SK-N-SH (cell line): ENCODE measurements at regions of chr10 and their contacts with region 1.

Region 1: GRCh38 chr10:49512121-49512809 is 26.7 kb downstream of the ERCC6 start:
- DNase-seq: peak; percentile 38
- H3K4me3 ChIP-seq: no peak overlapping the region
- H3K27ac ChIP-seq: no peak overlapping the region
- H3K4me1 ChIP-seq: no peaks in the 10 kb centered on the region; a peak in 1 of 4 replicates
- H3K27me3 ChIP-seq: no peaks in the 10 kb centered on the region
- CTCF ChIP-seq: peak; percentile 79
- EP300 ChIP-seq: no peak
- RAD21 ChIP-seq: peak; percentile 91

Region 2: DNA sequence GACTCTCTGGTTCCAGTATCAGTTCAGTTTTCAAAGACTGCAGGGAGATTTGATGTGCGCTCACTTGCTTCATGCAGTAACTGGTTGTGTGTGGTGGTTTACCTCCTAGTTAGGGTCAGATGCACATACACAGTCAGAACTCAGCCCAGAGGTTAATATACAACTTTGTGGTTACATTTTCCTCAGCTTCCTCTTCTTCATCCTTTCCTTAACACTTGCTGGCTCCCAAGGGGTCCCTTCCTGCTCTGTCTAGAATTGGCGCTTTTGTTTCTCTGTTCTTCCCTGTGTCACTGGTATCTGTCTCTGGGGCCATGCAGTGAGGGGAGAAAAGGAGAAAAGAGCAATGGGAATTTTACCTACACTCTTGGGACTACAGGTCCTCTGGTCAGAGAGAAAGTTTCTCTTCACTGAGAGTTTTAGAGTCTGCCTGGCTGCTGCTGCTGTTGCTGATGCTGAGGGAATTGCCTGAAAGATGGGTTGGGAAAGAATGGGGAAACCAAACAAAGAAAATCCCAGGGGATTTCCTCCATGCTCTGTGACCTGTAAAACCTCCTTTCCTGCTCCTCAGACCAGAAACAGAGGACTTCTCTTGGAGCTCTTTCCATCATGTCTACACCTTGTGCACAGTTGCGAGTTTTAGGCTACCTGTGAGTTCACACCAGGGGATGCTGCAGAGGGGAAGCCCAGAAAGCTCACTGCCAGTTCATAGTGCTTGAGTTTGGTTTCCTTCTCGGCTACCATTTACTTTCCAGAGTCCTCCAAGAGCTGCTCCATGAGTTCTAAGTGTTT is 753.0 kb before region 1 on chr10:
- CTCF ChIA-PET with region 1: no interaction called
- POLR2A ChIA-PET with region 1: no interaction called
- DNase-seq: no peak
- H3K4me3 ChIP-seq: no peak overlapping the region
- H3K27ac ChIP-seq: no peak overlapping the region
- H3K4me1 ChIP-seq: peaks cover 0 to 7% of the 10 kb centered on the region in 2 experiments; a peak in 1 of 4 replicates
- H3K27me3 ChIP-seq: no peaks in the 10 kb centered on the region
- CTCF ChIP-seq: no peak
- EP300 ChIP-seq: no peak
- RAD21 ChIP-seq: no peak

Region 3: GRCh38 chr10:48885383-48885782 is 626.9 kb before region 1 on chr10:
- CTCF ChIA-PET with region 1: interaction called, 14 read pairs
- POLR2A ChIA-PET with region 1: no interaction called
- DNase-seq: peak; percentile 70
- H3K4me3 ChIP-seq: no peak overlapping the region; a peak in 1 of 4 replicates
- H3K27ac ChIP-seq: no peak overlapping the region
- H3K4me1 ChIP-seq: no peaks in the 10 kb centered on the region; a peak in 1 of 4 replicates
- H3K27me3 ChIP-seq: no peaks in the 10 kb centered on the region
- CTCF ChIP-seq: no peak
- EP300 ChIP-seq: no peak
- RAD21 ChIP-seq: peak; percentile 82

Region 4: DNA sequence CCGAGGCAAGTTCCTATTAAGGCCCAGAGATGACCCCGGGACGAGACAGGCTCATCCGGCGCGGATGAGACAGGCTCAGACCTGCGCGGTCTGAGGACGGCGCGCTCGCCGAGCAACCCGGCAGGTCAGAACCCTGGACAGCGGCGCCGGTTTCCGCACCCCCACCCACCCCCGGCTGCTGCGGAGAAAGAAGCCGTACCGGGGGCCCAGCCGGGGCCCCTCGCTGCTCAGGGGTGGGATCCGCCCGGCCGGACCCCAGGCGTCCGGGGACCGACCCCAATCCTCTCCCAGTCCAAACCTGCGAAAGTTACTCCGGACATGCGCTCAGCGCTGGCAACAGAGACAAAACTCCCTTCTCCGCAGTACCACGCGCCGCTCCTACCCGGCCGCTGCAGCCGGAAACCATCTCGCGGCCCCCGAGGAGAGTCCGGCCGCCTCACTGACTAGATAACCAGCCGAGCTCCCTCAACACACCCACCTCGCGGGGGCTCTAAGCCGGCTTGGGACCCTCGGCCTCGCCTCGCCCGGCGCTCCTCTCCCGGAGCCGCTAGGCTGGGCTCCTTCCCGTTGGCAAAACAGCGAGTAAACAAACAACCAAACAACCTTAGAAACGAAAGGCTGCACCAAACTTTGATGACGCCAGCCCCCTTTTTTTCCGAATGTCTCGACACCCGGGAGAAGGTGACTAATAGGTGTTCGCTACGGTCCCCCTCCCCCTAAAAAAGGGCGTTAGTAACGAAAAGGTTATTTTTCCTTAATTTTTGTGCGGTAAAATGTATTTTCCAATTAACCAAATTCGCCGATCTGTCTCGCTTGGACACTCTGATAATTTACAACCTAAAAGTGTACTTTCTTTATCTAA is 114.0 kb before region 1 on chr10:
- CTCF ChIA-PET with region 1: interaction called, 16 read pairs
- POLR2A ChIA-PET with region 1: no interaction called
- DNase-seq: peak; percentile 76
- H3K4me3 ChIP-seq: peak overlapping the region; percentile 37 to 41
- H3K27ac ChIP-seq: no peak overlapping the region
- H3K4me1 ChIP-seq: peaks cover 0 to 28% of the 10 kb centered on the region in 2 experiments; a peak in 1 of 4 replicates
- H3K27me3 ChIP-seq: peaks cover 78% of the 10 kb centered on the region
- CTCF ChIP-seq: no peak
- EP300 ChIP-seq: no peak
- RAD21 ChIP-seq: no peak

Region 5: GRCh38 chr10:49446031-49446430 is 66.2 kb before region 1 on chr10:
- CTCF ChIA-PET with region 1: no interaction called
- POLR2A ChIA-PET with region 1: no interaction called
- DNase-seq: no peak
- H3K4me3 ChIP-seq: no peak overlapping the region
- H3K27ac ChIP-seq: no peak overlapping the region
- H3K4me1 ChIP-seq: no peaks in the 10 kb centered on the region
- H3K27me3 ChIP-seq: no peaks in the 10 kb centered on the region
- CTCF ChIP-seq: no peak
- EP300 ChIP-seq: no peak
- RAD21 ChIP-seq: no peak

Region 6: DNA sequence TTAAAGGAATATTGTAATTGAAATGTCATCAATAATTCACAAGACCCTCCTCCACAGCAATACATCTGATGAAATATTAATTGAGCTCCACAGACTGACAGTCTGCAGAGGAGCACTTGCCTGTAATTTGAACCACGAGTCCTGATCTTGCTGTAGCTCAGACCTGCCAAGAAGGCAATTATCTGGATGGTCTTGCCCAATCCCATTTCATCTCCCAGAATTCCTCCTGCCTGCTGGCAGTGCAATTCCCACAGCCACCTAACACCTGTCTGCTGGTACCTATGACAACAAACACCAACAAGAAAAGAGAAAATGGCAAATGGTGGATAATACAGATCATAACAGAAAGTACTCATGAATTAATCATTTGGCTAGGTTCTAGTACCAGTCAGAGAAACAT is 11.8 kb before region 1 on chr10:
- CTCF ChIA-PET with region 1: interaction called, 29 read pairs
- POLR2A ChIA-PET with region 1: no interaction called
- DNase-seq: no peak
- H3K4me3 ChIP-seq: no peak overlapping the region
- H3K27ac ChIP-seq: no peak overlapping the region
- H3K4me1 ChIP-seq: peaks cover 0 to 15% of the 10 kb centered on the region in 2 experiments; a peak in 2 of 4 replicates
- H3K27me3 ChIP-seq: no peaks in the 10 kb centered on the region
- CTCF ChIP-seq: no peak
- EP300 ChIP-seq: no peak
- RAD21 ChIP-seq: no peak

Region 7: DNA sequence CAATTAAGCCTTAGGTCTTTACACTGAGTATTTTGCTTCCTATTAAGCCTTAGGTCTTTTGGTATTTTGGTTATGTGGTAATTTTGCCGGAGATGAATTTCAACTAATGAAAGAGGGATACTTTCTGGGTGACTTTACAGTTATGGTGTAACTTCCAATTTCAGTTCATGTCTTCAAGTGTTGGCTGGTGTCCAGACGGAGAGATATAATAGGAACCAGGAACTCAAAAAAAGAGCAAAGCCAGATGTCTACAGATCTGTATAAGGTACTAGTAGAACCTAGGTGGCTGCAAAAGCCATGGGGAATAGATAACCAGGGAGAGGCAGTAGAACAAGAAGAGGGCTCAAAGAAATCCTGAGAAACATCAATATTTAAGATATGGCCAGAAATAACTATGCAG is 14.4 kb after region 1 on chr10:
- CTCF ChIA-PET with region 1: interaction called, 64 read pairs
- POLR2A ChIA-PET with region 1: no interaction called
- DNase-seq: no peak
- H3K4me3 ChIP-seq: no peak overlapping the region
- H3K27ac ChIP-seq: peak overlapping the region; percentile 20 to 78; a peak in 2 of 4 replicates
- H3K4me1 ChIP-seq: peaks cover 0 to 7% of the 10 kb centered on the region in 2 experiments; a peak in 2 of 4 replicates
- H3K27me3 ChIP-seq: no peaks in the 10 kb centered on the region
- CTCF ChIP-seq: no peak
- EP300 ChIP-seq: no peak
- RAD21 ChIP-seq: no peak